HCT116 (cell line): ENCODE measurements at regions of chr13 and their contacts with region 1.

Region 1: GRCh38 chr13:27826379-27827353 is 34.4 kb downstream of the GSX1 start:
- DNase-seq: peak; percentile 84
- ATAC-seq: peak; percentile 86
- H3K4me3 ChIP-seq: peak overlapping the region; percentile 35 to 54
- H3K27ac ChIP-seq: 0 out of 2 replicates have a peak overlapping the region, but pooled peaks have one; percentile 27
- H3K4me1 ChIP-seq: peaks cover 4 to 20% of the 10 kb centered on the region in 2 experiments; a peak in 3 of 4 replicates
- H3K27me3 ChIP-seq: peaks cover 15% of the 10 kb centered on the region
- CTCF ChIP-seq: peak; percentile 93 to 96 (median 94)
- POLR2A ChIP-seq: no peak
- RAD21 ChIP-seq: peak; percentile 89

Region 2: GRCh38 chr13:27362064-27362883 is 464.4 kb before region 1 on chr13:
- CTCF ChIA-PET with region 1: interaction called, 119 read pairs
- POLR2A ChIA-PET with region 1: no interaction called
- RAD21 ChIA-PET with region 1: interaction called, 17 to 45 read pairs
- intact Hi-C with region 1: loop called (anchors 1 kb)
- DNase-seq: peak; percentile 69
- ATAC-seq: peak; percentile 96
- H3K4me3 ChIP-seq: peak overlapping the region; percentile 40 to 55
- H3K27ac ChIP-seq: no peak overlapping the region
- H3K4me1 ChIP-seq: peaks cover 7 to 11% of the 10 kb centered on the region in 2 experiments
- H3K27me3 ChIP-seq: no peaks in the 10 kb centered on the region
- CTCF ChIP-seq: peak; percentile 80 to 91 (median 89)
- POLR2A ChIP-seq: no peak
- RAD21 ChIP-seq: peak; percentile 93

Region 3: DNA sequence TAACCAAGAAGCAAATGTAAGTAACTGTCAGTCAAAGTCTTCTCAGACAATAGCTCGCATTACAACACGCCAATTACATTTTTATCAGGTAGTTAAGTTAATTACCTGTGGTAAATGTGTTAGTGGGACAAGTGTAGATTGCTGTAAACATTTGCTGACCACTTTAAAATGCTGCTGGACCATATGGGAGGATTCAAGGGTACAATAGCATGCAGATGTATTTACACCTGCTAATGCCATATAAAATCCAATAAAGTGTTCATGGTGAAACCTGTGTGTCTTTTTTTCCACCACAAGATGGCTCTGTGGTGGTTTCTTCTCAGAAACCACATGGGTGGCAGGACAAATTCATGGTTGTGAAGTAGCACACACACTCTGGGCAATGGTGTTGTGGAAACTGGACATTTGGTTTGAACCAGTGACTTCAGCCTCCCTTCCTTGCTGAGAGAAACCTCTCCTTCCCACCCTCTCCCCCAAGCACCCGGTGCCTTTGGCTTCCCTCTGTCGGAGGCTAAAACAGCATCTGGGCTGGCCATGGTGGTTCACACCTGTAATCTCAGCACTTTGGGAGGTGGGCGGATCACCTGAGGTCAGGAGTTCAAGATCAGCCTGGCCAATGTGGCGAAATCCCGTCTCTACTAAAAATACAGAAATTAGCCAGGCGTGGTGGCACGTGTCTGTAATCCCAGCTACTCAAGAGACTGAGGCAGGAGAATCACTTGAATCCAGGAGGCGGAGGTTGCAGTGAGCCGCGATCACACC is 420.3 kb before region 1 on chr13:
- CTCF ChIA-PET with region 1: interaction called, 16 read pairs
- POLR2A ChIA-PET with region 1: no interaction called
- RAD21 ChIA-PET with region 1: no interaction called
- intact Hi-C with region 1: loop called (anchors 1 kb)
- DNase-seq: no peak
- ATAC-seq: peak; percentile 89
- H3K4me3 ChIP-seq: no peak overlapping the region
- H3K27ac ChIP-seq: no peak overlapping the region
- H3K4me1 ChIP-seq: peaks cover 0 to 5% of the 10 kb centered on the region in 2 experiments; a peak in 2 of 4 replicates
- H3K27me3 ChIP-seq: no peaks in the 10 kb centered on the region
- CTCF ChIP-seq: peak; percentile 61 to 70 (median 63); a peak in 5 of 6 replicates
- POLR2A ChIP-seq: no peak
- RAD21 ChIP-seq: peak; percentile 71

Region 4: DNA sequence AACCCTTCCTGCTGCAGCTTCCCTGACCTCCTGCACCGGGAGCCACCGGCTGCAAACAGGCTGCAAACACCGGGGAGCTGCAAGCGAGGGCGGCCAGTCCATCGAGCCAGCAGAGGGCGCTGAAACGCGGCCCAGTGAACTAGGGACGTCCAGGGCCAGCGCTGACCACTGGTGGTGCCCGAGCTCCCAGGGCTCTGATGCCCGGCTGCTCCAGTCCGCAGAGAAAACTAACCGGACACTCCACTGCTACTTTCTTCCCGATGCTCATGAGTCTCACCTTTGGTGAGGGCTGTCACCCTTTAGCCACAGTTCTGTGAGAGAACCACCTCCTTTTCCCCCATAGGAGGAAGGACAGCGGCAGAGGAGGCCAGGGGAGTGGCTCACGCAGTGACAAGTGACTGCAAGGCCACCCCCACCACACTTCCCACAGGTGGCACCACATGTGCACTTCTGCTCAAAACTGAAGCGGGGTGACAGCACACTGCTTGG is 293.5 kb before region 1 on chr13:
- CTCF ChIA-PET with region 1: interaction called, 64 read pairs
- POLR2A ChIA-PET with region 1: interaction called, 4 read pairs
- RAD21 ChIA-PET with region 1: interaction called, 11 to 14 read pairs
- intact Hi-C with region 1: loop called (anchors 1 kb)
- DNase-seq: peak; percentile 62
- ATAC-seq: peak; percentile 98
- H3K4me3 ChIP-seq: peak overlapping the region; percentile 27 to 31; a peak in 3 of 4 replicates
- H3K27ac ChIP-seq: no peak overlapping the region
- H3K4me1 ChIP-seq: peaks cover 0 to 7% of the 10 kb centered on the region in 2 experiments; a peak in 1 of 4 replicates
- H3K27me3 ChIP-seq: no peaks in the 10 kb centered on the region
- CTCF ChIP-seq: peak; percentile 96 to 97 (median 97)
- POLR2A ChIP-seq: no peak
- RAD21 ChIP-seq: peak; percentile 75

Region 5: DNA sequence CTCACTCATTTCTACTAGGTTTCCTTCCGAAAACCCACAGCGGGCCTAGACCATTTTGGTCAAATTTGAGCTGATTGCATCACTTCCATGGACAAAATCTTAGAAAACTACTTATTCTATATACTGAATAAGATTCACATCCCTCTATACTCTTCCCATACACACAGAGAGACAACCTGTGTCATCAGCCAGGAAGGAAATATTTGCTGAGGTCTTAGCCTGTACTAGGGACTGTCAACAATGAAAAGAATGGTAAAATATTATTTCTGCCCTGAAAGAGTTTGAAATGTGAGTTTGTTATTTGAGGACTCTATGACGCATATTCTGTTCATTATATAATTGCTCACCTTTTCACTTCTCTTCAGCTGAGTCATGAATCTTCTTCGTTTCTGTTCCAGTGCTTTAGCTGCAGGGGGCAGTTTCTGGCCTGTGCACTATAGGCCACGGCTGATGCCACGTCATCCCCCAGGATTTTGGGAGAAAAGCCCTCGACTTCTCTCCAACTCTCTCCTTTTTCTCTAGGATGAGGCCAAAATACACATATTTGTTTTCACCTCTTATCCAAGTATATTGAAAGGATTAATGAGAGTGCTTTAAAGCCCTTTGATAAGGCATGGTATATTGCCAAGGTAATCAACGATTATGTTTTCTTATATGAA is 13.3 kb after region 1 on chr13:
- CTCF ChIA-PET with region 1: interaction called, 22 read pairs
- POLR2A ChIA-PET with region 1: interaction called, 3 read pairs
- RAD21 ChIA-PET with region 1: interaction called in 1 of 2 experiments, 3 read pairs
- intact Hi-C with region 1: no loop called
- DNase-seq: peak; percentile 36
- ATAC-seq: peak; percentile 95
- H3K4me3 ChIP-seq: no peak overlapping the region
- H3K27ac ChIP-seq: no peak overlapping the region
- H3K4me1 ChIP-seq: peaks cover 3 to 12% of the 10 kb centered on the region in 2 experiments; a peak in 3 of 4 replicates
- H3K27me3 ChIP-seq: no peaks in the 10 kb centered on the region
- CTCF ChIP-seq: peak; percentile 22 to 26 (median 25); a peak in 4 of 6 replicates
- POLR2A ChIP-seq: no peak
- RAD21 ChIP-seq: peak; percentile 36; the same call in 1 of the 2 replicates

Region 6: GRCh38 chr13:27968316-27969081 is 141.8 kb after region 1 on chr13:
- CTCF ChIA-PET with region 1: interaction called, 13 read pairs
- POLR2A ChIA-PET with region 1: no interaction called
- RAD21 ChIA-PET with region 1: no interaction called
- intact Hi-C with region 1: no loop called
- DNase-seq: no peak
- ATAC-seq: peak; percentile 64
- H3K4me3 ChIP-seq: peak overlapping the region; percentile 81 to 84
- H3K27ac ChIP-seq: peak overlapping the region; percentile 83
- H3K4me1 ChIP-seq: peaks cover 6 to 20% of the 10 kb centered on the region in 2 experiments; a peak in 3 of 4 replicates
- H3K27me3 ChIP-seq: no peaks in the 10 kb centered on the region
- CTCF ChIP-seq: 0 out of 6 replicates have a peak, but pooled peaks of 1 of the 3 experiments have one; percentile 1
- POLR2A ChIP-seq: no peak
- RAD21 ChIP-seq: no peak